HEK293 (cell line): ENCODE measurements at regions of chr22 and their contacts with region 1.

Region 1: GRCh38 chr22:45994491-45995404 is 17.8 kb upstream of the WNT7B start:
- H3K4me3 ChIP-seq: no peak overlapping the region
- H3K27ac ChIP-seq: no peak overlapping the region
- H3K4me1 ChIP-seq: no peaks in the 10 kb centered on the region
- CTCF ChIP-seq: peak; percentile 95

Region 2: GRCh38 chr22:45645526-45646414 is 349.0 kb before region 1 on chr22:
- CTCF ChIA-PET with region 1: interaction called, 12 read pairs
- POLR2A ChIA-PET with region 1: no interaction called
- H3K4me3 ChIP-seq: no peak overlapping the region
- H3K27ac ChIP-seq: no peak overlapping the region
- H3K4me1 ChIP-seq: no peaks in the 10 kb centered on the region
- CTCF ChIP-seq: peak; percentile 84

Region 3: GRCh38 chr22:45911601-45912271 is 83.0 kb before region 1 on chr22:
- CTCF ChIA-PET with region 1: no interaction called
- POLR2A ChIA-PET with region 1: no interaction called
- H3K4me3 ChIP-seq: no peak overlapping the region
- H3K27ac ChIP-seq: no peak overlapping the region
- H3K4me1 ChIP-seq: no peaks in the 10 kb centered on the region
- CTCF ChIP-seq: no peak

Region 4: DNA sequence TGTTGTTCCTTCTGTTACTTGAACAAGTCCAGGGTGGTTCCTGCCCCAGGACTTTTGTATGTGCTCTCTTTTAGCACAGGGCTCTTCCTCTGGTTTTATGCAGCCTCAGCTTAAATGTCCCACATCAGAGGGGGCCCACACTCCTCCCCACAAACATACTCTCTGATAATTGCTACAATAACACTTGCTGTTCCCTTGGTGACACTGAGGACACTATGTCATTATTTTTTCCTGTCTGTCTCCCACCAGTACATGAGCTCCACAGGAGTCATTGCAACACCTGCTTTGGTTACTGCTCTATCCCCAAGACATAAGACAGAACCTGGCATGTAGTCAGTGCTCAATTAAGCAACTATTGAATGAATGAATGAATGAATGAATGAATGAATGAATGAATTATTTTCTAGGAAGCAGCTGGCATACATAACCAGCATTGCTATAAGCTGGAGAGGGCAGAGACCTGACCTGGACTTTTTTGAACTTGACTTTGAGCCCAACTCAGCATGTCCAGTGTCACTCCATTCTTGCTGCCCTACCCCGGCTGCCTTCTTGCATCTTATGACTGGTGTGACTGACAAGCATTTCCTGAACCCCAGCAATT is 10.3 kb before region 1 on chr22:
- CTCF ChIA-PET with region 1: interaction called, 14 read pairs
- POLR2A ChIA-PET with region 1: no interaction called
- H3K4me3 ChIP-seq: no peak overlapping the region
- H3K27ac ChIP-seq: no peak overlapping the region
- H3K4me1 ChIP-seq: no peaks in the 10 kb centered on the region
- CTCF ChIP-seq: no peak

Region 5: GRCh38 chr22:46079861-46080821 is 85.4 kb after region 1 on chr22:
- CTCF ChIA-PET with region 1: interaction called, 14 read pairs
- POLR2A ChIA-PET with region 1: no interaction called
- H3K4me3 ChIP-seq: no peak overlapping the region
- H3K27ac ChIP-seq: 0 out of 2 replicates have a peak overlapping the region, but pooled peaks have one; percentile 27
- H3K4me1 ChIP-seq: peaks cover 16% of the 10 kb centered on the region
- CTCF ChIP-seq: peak; percentile 34; the same call in 1 of the 2 replicates